ENCODE measurements at regions of chr18 and their contacts with region 1.

Region 1: GRCh38 chr18:3129053-3129864 is 90.5 kb downstream of the MYOM1 start:
- DNase-seq: peak; percentile 64 to 83 (median 77)
- ATAC-seq: peak; percentile 100
- H3K4me3 ChIP-seq: no peak overlapping the region
- H3K4me3 Mint-ChIP-seq: peak overlapping the region in 1 of 10 donors; percentile 33
- H3K27ac ChIP-seq: no peak overlapping the region
- H3K27ac Mint-ChIP-seq: peak overlapping the region in 4 of 9 donors; percentile 5 to 49 (median 16)
- H3K4me1 ChIP-seq: peaks cover 0 to 7% of the 10 kb centered on the region in 2 donors
- H3K4me1 Mint-ChIP-seq: peaks cover 7 to 10% (median 9%) of the 10 kb centered on the region in 7 donors
- H3K27me3 ChIP-seq: no peaks in the 10 kb centered on the region
- H3K27me3 Mint-ChIP-seq: peaks cover 0 to 3% (median 0%) of the 10 kb centered on the region in 5 donors

Region 2: GRCh38 chr18:2985628-2986027 is 143.6 kb before region 1 on chr18:
- CTCF ChIA-PET with region 1: interaction called, 15 read pairs
- POLR2A ChIA-PET with region 1: interaction called, 4 read pairs
- intact Hi-C with region 1: no loop called
- DNase-seq: peak in 7 of 9 donors; percentile 56 to 75 (median 66)
- ATAC-seq: peak; percentile 79
- H3K4me3 ChIP-seq: no peak overlapping the region
- H3K4me3 Mint-ChIP-seq: peak overlapping the region in 1 of 10 donors; percentile 27
- H3K27ac ChIP-seq: no peak overlapping the region
- H3K27ac Mint-ChIP-seq: peak overlapping the region in 7 of 9 donors; percentile 0 to 98 (median 67)
- H3K4me1 ChIP-seq: peaks cover 19 to 41% of the 10 kb centered on the region in 2 donors
- H3K4me1 Mint-ChIP-seq: peaks cover 34 to 80% (median 73%) of the 10 kb centered on the region in 7 donors
- H3K27me3 ChIP-seq: no peaks in the 10 kb centered on the region
- H3K27me3 Mint-ChIP-seq: no peaks in the 10 kb centered on the region

Region 3: DNA sequence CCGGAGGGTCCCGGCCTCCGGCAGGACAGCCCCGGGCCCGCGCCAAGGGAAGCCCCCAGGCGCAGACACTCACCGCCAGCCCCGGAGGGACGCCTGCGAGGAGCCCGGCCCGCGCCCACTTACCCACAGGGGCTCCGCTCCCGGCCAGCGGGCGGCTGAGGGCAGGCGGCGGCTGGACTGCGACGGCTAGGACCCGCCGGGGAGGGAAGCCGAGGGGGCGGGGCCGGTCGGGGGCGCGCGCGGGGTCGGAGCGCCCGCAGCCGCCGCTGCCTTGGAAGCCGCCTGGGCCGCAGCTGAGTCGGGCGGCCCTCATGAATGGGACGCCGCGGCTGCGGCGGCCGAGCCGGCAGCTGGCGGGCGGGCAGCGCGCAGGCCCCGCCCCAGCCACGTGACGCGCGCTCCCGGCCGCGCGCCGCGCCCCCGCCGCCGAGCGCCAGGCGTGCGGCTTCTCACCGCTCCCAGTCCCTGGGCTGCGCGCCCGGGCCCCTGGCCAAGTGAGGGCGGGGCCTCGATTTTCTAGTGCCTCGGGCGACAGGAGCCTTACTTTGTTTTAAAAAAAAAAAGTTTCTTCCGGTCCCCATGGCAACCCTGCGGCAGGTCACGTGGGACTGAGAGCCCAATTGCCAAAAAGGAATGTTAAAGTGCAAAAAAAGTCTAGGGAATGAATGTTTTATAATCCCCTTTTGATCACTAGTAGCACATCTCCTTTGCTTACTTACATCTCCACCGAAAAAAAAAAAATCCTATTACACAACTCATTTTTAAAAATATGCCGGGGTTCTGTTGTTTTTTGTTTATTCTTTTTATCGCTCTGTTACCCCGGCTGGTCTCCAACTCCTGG is 116.1 kb before region 1 on chr18 and contains the start of gene LPIN2:
- CTCF ChIA-PET with region 1: interaction called, 8 read pairs
- POLR2A ChIA-PET with region 1: no interaction called
- intact Hi-C with region 1: loop called (anchors 1 to 5 kb)
- DNase-seq: peak; percentile 96 to 98 (median 98)
- ATAC-seq: peak; percentile 92
- H3K4me3 ChIP-seq: peak within 1 kb of the TSS; percentile 61
- H3K4me3 Mint-ChIP-seq: peak within 1 kb of the TSS; percentile 93 to 99 (median 95)
- H3K27ac ChIP-seq: peak within 1 kb of the TSS; percentile 84
- H3K27ac Mint-ChIP-seq: peak within 1 kb of the TSS; percentile 91 to 98 (median 95)
- H3K4me1 ChIP-seq: peaks cover 8 to 61% of the 10 kb centered on the region in 2 donors
- H3K4me1 Mint-ChIP-seq: peaks cover 56 to 79% (median 74%) of the 10 kb centered on the region in 7 donors
- H3K27me3 ChIP-seq: no peaks in the 10 kb centered on the region
- H3K27me3 Mint-ChIP-seq: no peaks in the 10 kb centered on the region
- total RNA-seq, gene LPIN2: 58.8 to 133 (median 73.6) TPM

Region 4: GRCh38 chr18:3093624-3094337 is 35.5 kb before region 1 on chr18:
- CTCF ChIA-PET with region 1: interaction called, 11 read pairs
- POLR2A ChIA-PET with region 1: no interaction called
- intact Hi-C with region 1: loop called in 1 of 2 experiments (anchors 5 kb)
- DNase-seq: no peak
- ATAC-seq: no peak
- H3K4me3 ChIP-seq: no peak overlapping the region
- H3K4me3 Mint-ChIP-seq: no peak overlapping the region
- H3K27ac ChIP-seq: no peak overlapping the region
- H3K27ac Mint-ChIP-seq: peak overlapping the region in 3 of 9 donors; percentile 14 to 80 (median 14)
- H3K4me1 ChIP-seq: peaks cover 13 to 21% of the 10 kb centered on the region in 2 donors
- H3K4me1 Mint-ChIP-seq: peaks cover 17 to 36% (median 28%) of the 10 kb centered on the region in 7 donors
- H3K27me3 ChIP-seq: no peaks in the 10 kb centered on the region
- H3K27me3 Mint-ChIP-seq: no peaks in the 10 kb centered on the region

Region 5: GRCh38 chr18:3151399-3152264 is 22.4 kb after region 1 on chr18:
- CTCF ChIA-PET with region 1: interaction called, 6 read pairs
- POLR2A ChIA-PET with region 1: no interaction called
- intact Hi-C with region 1: loop called in 1 of 2 experiments (anchors 2 kb)
- DNase-seq: peak in 7 of 9 donors; percentile 12 to 50 (median 31)
- ATAC-seq: peak; percentile 45
- H3K4me3 ChIP-seq: no peak overlapping the region
- H3K4me3 Mint-ChIP-seq: no peak overlapping the region
- H3K27ac ChIP-seq: no peak overlapping the region
- H3K27ac Mint-ChIP-seq: peak overlapping the region in 2 of 9 donors; percentile 23 to 34
- H3K4me1 ChIP-seq: peaks cover 0 to 3% of the 10 kb centered on the region in 2 donors
- H3K4me1 Mint-ChIP-seq: peaks cover 3 to 12% (median 7%) of the 10 kb centered on the region in 7 donors
- H3K27me3 ChIP-seq: no peaks in the 10 kb centered on the region
- H3K27me3 Mint-ChIP-seq: peaks cover 0 to 8% (median 0%) of the 10 kb centered on the region in 5 donors

Measured in naive thymus-derived CD4-positive, alpha-beta T cell (primary cell).